HEK293T (cell line): ENCODE measurements at regions of chr4 and their contacts with region 1.

Region 1: DNA sequence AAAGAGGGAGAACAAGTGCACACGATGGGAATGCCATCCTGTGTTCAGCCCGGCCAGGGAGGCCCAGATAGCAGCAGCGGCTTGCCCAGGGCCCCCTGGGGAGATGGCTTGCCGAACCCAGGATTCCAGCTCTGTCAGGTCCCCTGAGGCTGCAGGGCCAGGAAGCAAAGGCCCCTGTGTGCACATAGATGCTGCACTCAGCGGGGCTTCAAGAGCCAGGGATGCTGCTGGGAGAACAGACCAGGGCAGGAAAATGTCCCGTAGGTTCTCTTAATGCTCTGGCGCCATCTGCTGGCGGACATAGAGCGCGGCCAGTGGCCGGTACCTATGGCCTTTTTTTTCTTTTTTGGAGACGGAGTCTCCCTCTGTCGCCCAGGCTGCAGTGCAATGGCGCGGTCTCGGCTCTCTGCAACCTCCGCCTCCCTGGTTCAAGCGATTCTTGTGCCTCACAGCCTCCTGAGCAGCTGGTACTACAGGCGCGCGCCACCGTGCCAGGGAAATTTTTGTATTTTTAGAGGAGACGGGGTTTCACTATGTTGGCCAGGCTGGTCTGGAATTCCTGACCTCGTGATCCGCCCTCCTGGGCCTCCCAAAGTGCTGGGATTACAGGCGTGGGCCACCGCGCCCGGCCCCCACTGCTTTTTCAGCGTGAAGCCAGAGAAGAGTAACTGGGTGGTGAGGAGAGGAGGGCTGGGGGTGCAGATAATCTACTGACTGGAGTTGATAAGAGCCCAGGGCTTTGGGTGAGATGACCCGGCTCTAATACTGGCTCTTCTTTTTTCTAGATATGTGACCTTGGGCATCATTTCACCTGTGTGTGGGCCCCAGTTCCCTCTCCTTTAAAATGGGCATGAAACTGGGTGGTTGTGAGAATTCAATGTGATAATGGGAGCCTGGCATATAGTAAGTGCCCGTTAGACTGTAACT is 22.5 kb downstream of the MED28 start:
- DNase-seq: peak; percentile 90

Region 2: DNA sequence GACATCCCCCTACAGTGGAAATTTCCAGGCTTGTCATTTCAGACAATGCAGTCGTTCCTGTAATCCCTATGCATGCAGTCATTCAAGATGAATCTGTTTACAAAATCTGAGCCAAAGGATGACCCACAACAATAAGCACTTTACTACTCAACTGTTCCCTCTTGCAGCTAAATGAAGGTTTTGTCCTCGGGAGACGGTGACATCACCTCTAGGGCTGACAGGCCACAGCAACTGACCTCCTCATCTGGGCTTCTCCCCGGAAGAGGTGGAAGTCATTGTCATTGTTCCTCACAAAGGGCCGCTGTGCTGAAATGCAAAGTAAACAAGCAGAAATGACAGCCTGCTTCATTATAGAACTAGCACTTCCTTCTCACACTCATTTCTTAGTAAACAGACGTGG is 92.8 kb before region 1 on chr4:
- CTCF ChIA-PET with region 1: interaction called, 11 read pairs
- POLR2A ChIA-PET with region 1: no interaction called
- DNase-seq: no peak